ENCODE measurements at regions of chr12 and their contacts with region 1.

Region 1: GRCh38 chr12:84166812-84167211 is 745.8 kb downstream of the SLC6A15 start:
- DNase-seq: no peak
- H3K4me3 ChIP-seq: no peak overlapping the region
- CTCF ChIP-seq: no peak
- POLR2A ChIP-seq: no peak

Region 2: GRCh38 chr12:84862186-84862585 is 695.4 kb after region 1 on chr12:
- intact Hi-C with region 1: loop called (anchors 5 kb)
- DNase-seq: no peak
- H3K4me3 ChIP-seq: no peak overlapping the region
- CTCF ChIP-seq: no peak
- POLR2A ChIP-seq: no peak